Cardiac septum (tissue), 1 donor: ENCODE measurements at regions of chr10 and their contacts with region 1.

Region 1: DNA sequence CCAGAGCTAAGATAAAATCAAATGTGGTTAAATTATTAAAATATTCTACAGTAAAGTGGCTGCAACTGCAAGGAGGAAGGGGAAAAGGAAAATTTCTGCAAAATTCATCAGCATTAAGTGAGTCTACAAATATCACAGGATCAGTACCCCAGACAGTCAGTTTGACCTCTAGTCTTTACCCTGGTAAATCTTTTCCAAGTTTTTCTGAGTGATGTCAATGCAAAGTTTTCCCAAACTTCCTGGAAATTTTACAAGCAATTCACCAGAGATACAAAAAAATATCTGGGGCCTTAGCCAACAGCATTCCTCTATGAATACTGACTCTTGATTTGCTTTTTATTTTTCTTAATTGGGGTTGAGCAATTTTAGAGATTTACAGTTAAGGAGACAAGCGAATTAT is 539.3 kb upstream of the FZD8 start:
- DNase-seq: no peak

Region 2: DNA sequence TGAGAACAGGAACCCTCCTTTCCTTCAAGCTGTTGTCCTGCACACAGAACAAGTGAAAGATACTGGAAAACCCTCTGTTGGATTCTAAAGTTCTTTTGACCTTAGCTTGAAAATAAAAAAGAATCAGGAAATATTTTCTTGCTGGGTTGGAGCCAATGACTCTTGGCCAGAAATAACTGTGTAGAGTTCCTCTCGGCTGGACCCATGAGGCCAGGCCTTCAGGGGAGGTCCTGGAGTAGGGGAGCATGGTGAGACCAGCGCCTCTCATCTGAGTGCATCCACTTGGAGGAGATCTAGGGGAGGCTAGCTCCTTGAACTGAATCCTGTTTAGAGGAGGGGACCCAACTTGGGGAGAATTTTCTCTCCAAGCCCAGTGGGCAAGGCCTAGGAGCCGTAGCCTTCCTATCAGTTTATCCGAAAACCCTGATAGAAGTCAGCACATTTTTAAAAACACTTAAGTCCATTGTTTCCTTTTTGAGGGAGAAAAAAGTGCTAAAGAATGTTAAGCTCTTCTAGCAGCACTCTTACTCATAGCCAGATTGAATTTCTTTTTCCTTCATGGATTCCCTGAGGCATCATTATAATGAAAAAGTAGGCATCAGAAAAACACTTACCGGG is 308.3 kb after region 1 on chr10:
- intact Hi-C with region 1: loop called (anchors 5 kb)
- DNase-seq: no peak